Endothelial cell of umbilical vein (primary cell): ENCODE measurements at regions of chr12 and their contacts with region 1.

Region 1: GRCh38 chr12:75390899-75391538 is at the start of gene GLIPR1L2:
- DNase-seq: peak; percentile 98
- H3K4me3 ChIP-seq: peak within 1 kb of the TSS; percentile 2 to 63 (median 50)
- H3K27ac ChIP-seq: peak within 1 kb of the TSS; percentile 31
- H3K4me1 ChIP-seq: peaks cover 29% of the 10 kb centered on the region
- H3K27me3 ChIP-seq: no peaks in the 10 kb centered on the region
- CTCF ChIP-seq: peak; percentile 89 to 94
- POLR2A ChIP-seq: no peak
- total RNA-seq, gene GLIPR1L2: not detected in 2 replicates

Region 2: GRCh38 chr12:75334384-75335030 is 56.5 kb before region 1 on chr12 and contains the start of gene GLIPR1L1:
- CTCF ChIA-PET with region 1: interaction called, 20 read pairs
- POLR2A ChIA-PET with region 1: no interaction called
- dilution Hi-C with region 1: no loop called
- intact Hi-C with region 1: loop called (anchors 2 kb)
- DNase-seq: peak; percentile 88
- H3K4me3 ChIP-seq: peak within 1 kb of the TSS; percentile 20 to 58 (median 56)
- H3K27ac ChIP-seq: no peak within 1 kb of the TSS
- H3K4me1 ChIP-seq: peaks cover 10% of the 10 kb centered on the region
- H3K27me3 ChIP-seq: peaks cover 2 to 13% of the 10 kb centered on the region in 2 experiments
- CTCF ChIP-seq: peak; percentile 85 to 91
- POLR2A ChIP-seq: no peak
- total RNA-seq, gene GLIPR1L1: not detected in 2 replicates

Region 3: DNA sequence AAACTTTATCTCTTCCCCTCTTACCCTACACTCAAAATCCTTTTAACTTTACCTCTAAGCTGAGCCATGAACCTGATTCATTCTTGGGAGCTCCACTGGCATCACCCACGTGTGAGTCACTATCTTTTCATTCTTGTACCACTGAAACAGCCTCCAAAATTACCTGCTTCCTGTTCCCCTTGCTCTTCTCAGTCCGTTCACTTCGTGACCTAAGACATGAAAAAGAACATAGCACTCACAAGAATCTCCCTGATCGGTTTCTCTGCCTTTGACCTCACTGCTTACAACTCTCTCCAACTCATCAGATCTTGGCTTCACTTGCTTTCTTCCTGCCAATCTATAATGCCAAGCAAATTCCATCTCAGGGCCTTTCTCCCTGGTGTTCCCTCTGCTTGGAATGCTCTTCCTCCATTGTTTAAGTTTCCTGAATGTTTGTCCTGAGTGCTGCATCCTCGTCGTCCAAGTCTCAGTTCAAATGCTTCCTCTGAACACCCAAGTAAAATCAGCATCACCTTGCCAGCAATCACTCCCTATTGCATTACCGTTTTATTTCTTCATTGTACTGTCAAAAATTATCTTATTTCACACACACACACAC is 98.7 kb after region 1 on chr12:
- CTCF ChIA-PET with region 1: interaction called, 24 read pairs
- POLR2A ChIA-PET with region 1: no interaction called
- dilution Hi-C with region 1: no loop called
- intact Hi-C with region 1: no loop called
- DNase-seq: peak; percentile 52
- H3K4me3 ChIP-seq: no peak overlapping the region
- H3K27ac ChIP-seq: peak overlapping the region; percentile 28
- H3K4me1 ChIP-seq: peaks cover 14% of the 10 kb centered on the region
- H3K27me3 ChIP-seq: no peaks in the 10 kb centered on the region
- CTCF ChIP-seq: no peak
- POLR2A ChIP-seq: no peak

Region 4: GRCh38 chr12:75505706-75506312 is 114.8 kb after region 1 on chr12:
- CTCF ChIA-PET with region 1: interaction called, 6 read pairs
- POLR2A ChIA-PET with region 1: no interaction called
- dilution Hi-C with region 1: no loop called
- intact Hi-C with region 1: loop called (anchors 1 kb)
- DNase-seq: peak; percentile 60
- H3K4me3 ChIP-seq: no peak overlapping the region
- H3K27ac ChIP-seq: no peak overlapping the region
- H3K4me1 ChIP-seq: peaks cover 8% of the 10 kb centered on the region
- H3K27me3 ChIP-seq: no peaks in the 10 kb centered on the region
- CTCF ChIP-seq: peak; percentile 32 to 50
- POLR2A ChIP-seq: peak; percentile 38

Region 5: DNA sequence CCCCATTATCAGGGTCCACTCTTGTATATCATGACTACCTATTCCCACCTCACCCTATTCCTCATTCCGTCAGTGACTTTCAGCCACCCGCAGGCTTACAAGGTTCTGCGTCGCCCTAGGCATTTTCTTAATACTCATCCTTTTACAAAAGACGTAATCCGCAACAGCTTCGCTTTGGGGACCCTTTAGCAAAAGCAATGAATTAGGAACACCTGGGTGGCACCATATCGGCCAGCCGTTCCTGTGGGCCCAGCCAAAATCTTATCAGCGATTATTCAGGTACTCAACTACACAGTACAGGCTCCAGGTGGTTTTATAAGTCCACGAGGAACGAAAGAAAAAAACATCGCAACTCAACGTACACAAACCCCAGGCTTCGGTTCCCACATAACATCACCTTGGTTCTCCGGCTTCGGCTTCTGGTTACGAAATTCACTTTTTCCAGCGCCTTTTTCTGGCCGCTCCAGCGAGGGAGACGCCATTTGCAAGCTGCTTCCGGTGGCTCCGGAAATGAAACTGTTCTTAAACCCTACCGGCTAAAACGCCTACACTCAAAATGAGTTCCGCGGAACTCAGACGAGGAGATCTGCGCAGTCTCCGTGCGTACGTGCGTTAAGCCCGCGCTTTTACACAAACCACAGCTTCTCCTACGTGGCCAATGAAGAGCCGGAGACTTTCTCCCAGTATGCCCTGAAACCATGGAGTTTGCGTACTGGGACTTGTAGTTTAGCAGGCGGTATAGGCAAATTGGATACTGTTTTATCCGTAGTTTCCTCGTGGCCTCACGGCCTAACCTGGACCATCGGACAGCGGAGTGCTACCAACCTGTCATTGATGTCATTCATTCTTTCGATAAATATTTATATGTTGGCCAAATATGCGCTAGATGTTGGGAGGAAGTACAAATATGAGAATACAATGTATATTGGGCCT is 120.4 kb after region 1 on chr12 and contains the start of gene KRR1:
- CTCF ChIA-PET with region 1: interaction called, 6 read pairs
- POLR2A ChIA-PET with region 1: no interaction called
- dilution Hi-C with region 1: no loop called
- intact Hi-C with region 1: loop called (anchors 2 kb)
- DNase-seq: peak; percentile 99
- H3K4me3 ChIP-seq: peak within 1 kb of the TSS; percentile 91 to 98 (median 93)
- H3K27ac ChIP-seq: peak within 1 kb of the TSS; percentile 91
- H3K4me1 ChIP-seq: peaks cover 12% of the 10 kb centered on the region
- H3K27me3 ChIP-seq: no peaks in the 10 kb centered on the region
- CTCF ChIP-seq: no peak
- POLR2A ChIP-seq: peak; percentile 66
- total RNA-seq, gene KRR1: 49.3 and 53.4 TPM in 2 replicates